ENCODE measurements at regions of chr12 and their contacts with region 1.

Region 1: DNA sequence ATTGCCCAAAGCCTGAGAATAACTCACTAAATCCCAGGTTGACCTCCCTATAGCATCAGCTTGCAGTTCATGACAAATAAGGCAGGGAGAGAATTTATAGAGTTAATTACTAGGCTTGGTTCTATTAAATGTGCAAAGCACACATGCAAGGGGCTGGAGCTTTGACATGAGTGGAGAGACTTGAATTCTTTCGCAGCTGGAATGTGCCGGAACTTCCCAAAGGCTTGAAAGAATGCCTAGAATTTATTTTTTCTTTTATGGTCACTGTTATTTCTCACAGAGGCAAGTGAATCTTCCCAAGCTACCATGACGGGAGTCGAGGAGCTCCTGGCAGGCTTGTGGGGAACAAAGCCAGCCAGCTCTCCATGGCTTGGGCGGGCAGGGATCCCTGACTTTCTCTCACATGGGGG is 95.5 kb upstream of the USP44 start:
- DNase-seq: peak; percentile 100
- H3K4me3 ChIP-seq: no peak overlapping the region
- CTCF ChIP-seq: no peak

Region 2: DNA sequence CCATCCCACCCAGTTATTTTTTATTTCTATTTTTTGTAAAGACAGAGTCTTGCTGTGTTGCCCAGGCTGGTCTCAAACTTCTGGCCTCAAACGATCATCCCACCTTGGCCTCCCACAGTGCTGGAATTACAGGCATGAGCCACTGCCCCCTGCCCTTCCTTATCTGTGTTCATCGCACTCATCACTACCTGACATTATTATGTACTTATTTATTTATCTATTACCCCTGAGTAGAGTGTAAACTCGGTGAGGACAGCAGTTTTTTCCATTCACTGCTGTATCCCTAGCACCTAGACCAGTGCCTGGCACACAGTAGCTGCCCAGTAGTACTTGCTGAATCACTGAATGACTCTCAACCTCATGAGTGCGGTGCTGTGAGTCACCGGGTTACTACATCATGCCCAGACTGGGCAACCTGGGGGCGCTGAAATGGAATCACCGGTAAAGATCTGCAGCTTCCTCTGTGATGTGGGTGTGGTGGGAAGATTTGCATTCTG is 13.7 kb before region 1 on chr12:
- CTCF ChIA-PET with region 1: interaction called, 11 read pairs
- POLR2A ChIA-PET with region 1: interaction called, 5 read pairs
- DNase-seq: no peak
- H3K4me3 ChIP-seq: no peak overlapping the region
- CTCF ChIP-seq: no peak

Measured in AG04449 (cell line).